ENCODE measurements at regions of chr4 and their contacts with region 1.

Region 1: GRCh38 chr4:15956179-15956850 is 6.7 kb downstream of the FGFBP2 start:
- DNase-seq: peak; percentile 72 to 77
- ATAC-seq: peak; percentile 94 to 96
- H3K4me3 ChIP-seq: no peak overlapping the region
- H3K27ac ChIP-seq: peak overlapping the region; percentile 19 to 57; a peak in 3 of 6 replicates
- H3K4me1 ChIP-seq: peaks cover 5% of the 10 kb centered on the region
- CTCF ChIP-seq: peak; percentile 92
- EP300 ChIP-seq: no peak
- POLR2A ChIP-seq: no peak
- RAD21 ChIP-seq: peak; percentile 97 to 99

Region 2: DNA sequence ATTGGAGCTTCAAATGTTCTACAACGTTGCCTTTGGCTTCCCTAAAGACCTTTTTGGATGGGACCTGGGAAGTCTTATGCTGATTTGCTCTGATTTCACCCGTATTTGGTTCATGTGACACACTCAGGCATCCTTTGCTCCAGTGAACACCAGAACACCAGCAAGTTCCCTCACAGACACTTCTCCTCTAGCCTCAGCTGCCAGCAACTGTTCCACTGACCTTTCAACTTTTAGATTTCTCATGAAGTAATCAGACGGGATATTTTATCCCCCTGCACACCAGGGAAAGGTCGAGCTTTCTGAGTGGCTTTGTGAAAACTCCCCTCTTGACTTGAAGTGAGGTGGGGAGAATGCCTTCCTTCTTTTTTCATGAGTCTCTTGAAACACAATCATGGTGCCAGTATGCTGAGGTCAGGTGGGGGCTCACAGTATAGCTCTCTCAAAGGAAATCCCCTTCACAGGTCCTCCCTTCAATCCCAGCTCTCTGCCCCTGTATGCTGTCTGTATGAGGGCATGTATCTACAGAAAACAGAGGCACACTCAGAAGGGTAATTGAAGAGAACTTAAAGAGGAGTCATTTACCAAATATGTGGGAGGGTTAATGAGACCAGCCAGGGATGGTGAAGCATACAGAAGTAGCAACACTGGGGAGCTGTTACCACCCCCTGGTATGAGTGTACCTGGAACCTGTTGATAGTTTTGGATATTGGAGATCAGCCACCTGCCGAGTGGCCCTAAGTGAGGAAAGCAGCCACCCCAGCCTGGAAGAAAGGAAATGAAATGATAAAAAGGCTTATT is 80.5 kb before region 1 on chr4:
- CTCF ChIA-PET with region 1: interaction called, 188 read pairs
- POLR2A ChIA-PET with region 1: no interaction called
- DNase-seq: no peak
- ATAC-seq: no peak
- H3K4me3 ChIP-seq: no peak overlapping the region
- H3K27ac ChIP-seq: no peak overlapping the region
- H3K4me1 ChIP-seq: no peaks in the 10 kb centered on the region
- CTCF ChIP-seq: no peak
- EP300 ChIP-seq: no peak
- POLR2A ChIP-seq: no peak
- RAD21 ChIP-seq: no peak

Region 3: DNA sequence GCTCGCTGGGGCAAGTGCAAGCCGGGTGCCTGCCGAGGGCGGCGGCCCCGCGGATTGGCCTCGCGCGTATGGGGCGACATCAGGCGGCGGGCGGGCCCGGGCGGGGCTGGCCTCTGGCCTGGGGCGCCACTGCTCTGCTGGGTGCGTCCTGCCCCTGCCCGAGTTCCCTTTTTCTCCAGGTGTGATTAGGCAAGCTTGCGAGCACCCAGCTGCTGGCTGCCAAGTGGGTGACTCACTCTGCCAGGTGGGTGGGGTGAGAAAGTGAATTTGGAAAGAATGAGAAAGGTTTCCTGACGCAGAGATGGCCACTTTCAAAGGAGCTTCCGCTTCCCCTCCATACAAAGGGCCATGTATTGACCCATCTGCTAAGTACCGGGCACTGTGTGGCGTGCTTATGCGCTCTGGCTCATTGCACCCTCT is 50.3 kb before region 1 on chr4:
- CTCF ChIA-PET with region 1: interaction called, 24 read pairs
- POLR2A ChIA-PET with region 1: no interaction called
- DNase-seq: peak; percentile 85 to 90
- ATAC-seq: peak; percentile 96 to 97
- H3K4me3 ChIP-seq: peak overlapping the region; percentile 30
- H3K27ac ChIP-seq: peak overlapping the region; percentile 75 to 87
- H3K4me1 ChIP-seq: peaks cover 17% of the 10 kb centered on the region; the same call in 2 of the 3 replicates
- CTCF ChIP-seq: no peak
- EP300 ChIP-seq: peak; percentile 44 to 50; a peak in 2 of 5 replicates
- POLR2A ChIP-seq: no peak
- RAD21 ChIP-seq: peak in 1 of 2 experiments; percentile 44; a peak in 2 of 5 replicates

Region 4: DNA sequence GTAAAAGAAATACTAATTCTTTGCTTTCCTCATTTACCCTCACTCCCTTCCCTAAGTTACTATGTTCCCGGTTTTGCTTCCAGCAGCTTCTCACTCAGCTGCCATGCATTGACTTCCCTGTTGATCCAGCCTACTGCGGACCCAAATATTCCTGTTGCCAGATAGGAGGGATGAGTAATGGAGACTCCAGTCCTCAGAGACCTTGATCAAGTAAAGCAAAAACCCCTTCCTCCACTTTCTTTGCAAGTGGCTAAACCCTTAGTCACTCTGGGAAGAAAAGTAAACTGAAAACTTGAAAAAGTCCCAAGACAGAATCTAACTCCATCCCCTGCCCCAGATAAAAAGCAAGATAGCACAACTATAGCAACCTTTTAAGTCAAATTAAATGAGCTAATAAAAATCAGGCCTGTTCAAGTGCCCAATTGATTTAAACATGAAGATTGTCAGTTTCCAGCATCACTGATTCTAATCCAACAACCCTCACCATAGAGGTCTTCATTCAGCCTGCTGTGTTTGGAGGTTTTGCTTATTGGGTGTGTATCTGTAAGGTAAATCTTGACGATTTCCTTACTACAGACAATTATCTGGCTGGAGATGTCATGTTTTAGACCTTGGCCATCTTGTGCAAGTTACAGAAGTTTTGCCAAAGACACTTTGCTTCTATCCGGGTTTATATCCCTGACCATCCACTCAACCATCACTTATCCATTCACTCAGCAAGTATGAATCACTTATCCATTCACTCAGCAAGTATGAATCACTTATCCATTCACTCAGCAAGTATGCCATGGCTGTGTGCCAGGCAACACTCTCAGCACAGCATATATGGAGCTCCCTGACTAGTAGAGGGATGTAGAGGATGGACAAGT is 35.4 kb before region 1 on chr4:
- CTCF ChIA-PET with region 1: interaction called, 24 read pairs
- POLR2A ChIA-PET with region 1: no interaction called
- DNase-seq: peak; percentile 63 to 90
- ATAC-seq: peak; percentile 97 to 99
- H3K4me3 ChIP-seq: no peak overlapping the region
- H3K27ac ChIP-seq: peak overlapping the region; percentile 87
- H3K4me1 ChIP-seq: peaks cover 39% of the 10 kb centered on the region
- CTCF ChIP-seq: no peak
- EP300 ChIP-seq: peak in 1 of 2 experiments; percentile 27; a peak in 1 of 5 replicates
- POLR2A ChIP-seq: no peak
- RAD21 ChIP-seq: peak in 1 of 2 experiments; percentile 16; a peak in 1 of 5 replicates

Region 5: DNA sequence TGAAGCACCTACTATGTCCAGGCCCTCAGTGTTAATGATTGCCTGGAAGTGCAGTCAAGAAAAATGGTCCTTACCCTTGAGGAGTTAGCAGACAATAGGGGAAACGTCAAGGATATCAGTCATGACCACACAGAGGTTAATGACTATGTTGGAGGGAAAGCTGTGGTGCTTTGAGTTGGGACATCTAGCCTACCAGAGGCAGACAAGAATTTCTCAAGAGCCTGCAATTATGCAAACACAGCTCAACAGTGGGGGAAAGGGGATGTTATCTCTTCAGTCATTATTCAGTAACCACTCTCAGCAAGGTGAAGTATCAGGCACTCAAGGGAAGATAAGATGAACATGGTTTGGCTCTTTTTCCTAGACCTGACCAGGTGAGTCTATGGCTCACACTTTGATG is 10.8 kb before region 1 on chr4:
- CTCF ChIA-PET with region 1: interaction called, 14 read pairs
- POLR2A ChIA-PET with region 1: no interaction called
- DNase-seq: no peak
- ATAC-seq: no peak
- H3K4me3 ChIP-seq: no peak overlapping the region
- H3K27ac ChIP-seq: no peak overlapping the region
- H3K4me1 ChIP-seq: no peaks in the 10 kb centered on the region
- CTCF ChIP-seq: no peak
- EP300 ChIP-seq: no peak
- POLR2A ChIP-seq: no peak
- RAD21 ChIP-seq: no peak

Region 6: GRCh38 chr4:15995826-15996225 is 39.5 kb after region 1 on chr4:
- CTCF ChIA-PET with region 1: interaction called, 11 read pairs
- POLR2A ChIA-PET with region 1: no interaction called
- DNase-seq: no peak
- ATAC-seq: no peak
- H3K4me3 ChIP-seq: no peak overlapping the region
- H3K27ac ChIP-seq: no peak overlapping the region
- H3K4me1 ChIP-seq: no peaks in the 10 kb centered on the region
- CTCF ChIP-seq: no peak
- EP300 ChIP-seq: no peak
- POLR2A ChIP-seq: no peak
- RAD21 ChIP-seq: no peak

Region 7: DNA sequence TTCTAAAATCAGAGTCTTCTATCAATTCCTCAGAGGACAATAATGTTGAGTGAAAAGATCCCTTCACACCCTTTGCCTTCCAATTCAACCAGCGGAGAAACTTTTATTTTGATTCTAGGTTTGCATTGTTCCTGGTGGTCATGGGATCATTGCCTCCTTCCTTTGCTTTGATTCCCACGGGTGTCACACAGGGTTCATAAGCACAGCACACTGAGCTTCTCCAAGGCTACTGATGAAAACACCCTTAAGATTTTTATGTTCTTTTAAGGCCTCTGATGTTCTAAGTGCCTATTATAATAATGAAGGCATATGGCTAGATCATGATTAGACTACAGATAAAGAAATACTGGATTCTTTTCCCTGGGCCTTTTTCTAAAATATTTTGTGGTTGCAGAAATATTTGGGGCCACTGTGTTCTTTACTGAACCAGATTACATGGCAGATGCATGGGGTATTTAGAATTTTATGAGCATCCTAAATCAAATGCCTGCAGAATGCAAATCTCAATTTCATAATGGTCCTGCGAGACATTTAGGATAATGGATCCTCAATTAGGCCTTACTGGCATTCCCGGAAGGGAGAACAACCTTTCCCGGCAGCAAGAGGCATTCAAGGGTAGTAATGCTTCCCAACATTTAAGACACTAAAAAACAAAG is 50.6 kb after region 1 on chr4:
- CTCF ChIA-PET with region 1: interaction called, 16 read pairs
- POLR2A ChIA-PET with region 1: no interaction called
- DNase-seq: no peak
- ATAC-seq: no peak
- H3K4me3 ChIP-seq: no peak overlapping the region
- H3K27ac ChIP-seq: no peak overlapping the region
- H3K4me1 ChIP-seq: no peaks in the 10 kb centered on the region
- CTCF ChIP-seq: no peak
- EP300 ChIP-seq: no peak
- POLR2A ChIP-seq: no peak
- RAD21 ChIP-seq: no peak

Region 8: DNA sequence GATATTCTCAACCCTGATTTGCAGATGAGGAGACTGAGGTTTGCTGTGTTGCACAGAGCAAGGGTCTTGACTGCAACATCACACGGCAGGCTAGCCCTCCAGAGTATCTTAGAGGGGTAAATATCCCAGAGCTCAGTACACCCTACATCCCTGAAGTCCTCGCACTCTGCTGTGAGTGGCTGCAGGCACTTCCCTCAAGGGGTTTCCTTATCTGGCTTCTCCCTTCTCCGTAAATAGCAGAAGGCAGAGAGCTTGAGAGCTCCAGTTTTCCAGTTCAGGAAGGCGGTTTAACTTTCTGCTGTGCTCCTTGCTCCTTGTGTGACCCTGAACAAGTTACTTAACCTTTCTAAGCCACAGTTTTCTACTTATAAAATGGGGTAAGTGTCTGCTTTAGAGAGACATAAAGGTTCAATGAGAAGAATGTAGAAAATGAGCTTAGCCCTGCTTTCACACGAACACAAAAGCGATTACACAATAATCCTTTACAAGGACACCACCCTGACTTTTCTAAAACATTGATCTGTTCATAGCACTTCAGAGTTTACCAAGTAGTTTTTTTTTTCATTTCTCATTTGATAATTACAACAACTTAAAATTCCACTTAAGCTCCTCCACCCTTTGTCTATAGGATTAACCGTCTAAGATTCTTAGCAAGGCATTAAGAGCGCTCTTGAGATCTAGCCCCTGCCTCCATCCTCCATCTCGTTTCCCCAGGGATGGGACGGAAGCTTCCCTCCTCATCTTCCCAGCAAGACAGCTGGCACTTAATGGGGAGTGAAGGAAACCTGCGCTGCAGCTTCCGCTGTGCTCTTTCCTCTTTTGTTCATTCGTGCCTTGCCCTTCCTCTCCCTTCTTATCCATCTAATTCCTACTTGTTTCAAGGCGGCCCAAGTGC is 201.5 kb after region 1 on chr4:
- CTCF ChIA-PET with region 1: no interaction called
- POLR2A ChIA-PET with region 1: no interaction called
- DNase-seq: no peak
- ATAC-seq: no peak
- H3K4me3 ChIP-seq: no peak overlapping the region
- H3K27ac ChIP-seq: no peak overlapping the region
- H3K4me1 ChIP-seq: no peaks in the 10 kb centered on the region
- CTCF ChIP-seq: no peak
- EP300 ChIP-seq: no peak
- POLR2A ChIP-seq: no peak
- RAD21 ChIP-seq: no peak

Measured in A549 (cell line).